ENCODE measurements at regions of chr15 and their contacts with region 1.

Region 1: GRCh38 chr15:28021281-28022039 is 77.7 kb downstream of the OCA2 start:
- DNase-seq: peak; percentile 73
- ATAC-seq: peak; percentile 75
- H3K4me3 Mint-ChIP-seq: no peak overlapping the region
- H3K27ac Mint-ChIP-seq: no peak overlapping the region
- H3K4me1 Mint-ChIP-seq: peaks cover 25% of the 10 kb centered on the region
- H3K27me3 Mint-ChIP-seq: peaks cover 5% of the 10 kb centered on the region
- CTCF ChIP-seq: peak; percentile 39; the same call in 1 of the 2 replicates

Region 2: GRCh38 chr15:27686369-27686768 is 335.1 kb before region 1 on chr15:
- CTCF ChIA-PET with region 1: interaction called, 38 read pairs
- POLR2A ChIA-PET with region 1: no interaction called
- DNase-seq: no peak
- ATAC-seq: peak; percentile 56
- H3K4me3 Mint-ChIP-seq: no peak overlapping the region
- H3K27ac Mint-ChIP-seq: 0 out of 2 replicates have a peak overlapping the region, but pooled peaks have one; percentile 27
- H3K4me1 Mint-ChIP-seq: peaks cover 12% of the 10 kb centered on the region
- H3K27me3 Mint-ChIP-seq: no peaks in the 10 kb centered on the region
- CTCF ChIP-seq: no peak

Region 3: DNA sequence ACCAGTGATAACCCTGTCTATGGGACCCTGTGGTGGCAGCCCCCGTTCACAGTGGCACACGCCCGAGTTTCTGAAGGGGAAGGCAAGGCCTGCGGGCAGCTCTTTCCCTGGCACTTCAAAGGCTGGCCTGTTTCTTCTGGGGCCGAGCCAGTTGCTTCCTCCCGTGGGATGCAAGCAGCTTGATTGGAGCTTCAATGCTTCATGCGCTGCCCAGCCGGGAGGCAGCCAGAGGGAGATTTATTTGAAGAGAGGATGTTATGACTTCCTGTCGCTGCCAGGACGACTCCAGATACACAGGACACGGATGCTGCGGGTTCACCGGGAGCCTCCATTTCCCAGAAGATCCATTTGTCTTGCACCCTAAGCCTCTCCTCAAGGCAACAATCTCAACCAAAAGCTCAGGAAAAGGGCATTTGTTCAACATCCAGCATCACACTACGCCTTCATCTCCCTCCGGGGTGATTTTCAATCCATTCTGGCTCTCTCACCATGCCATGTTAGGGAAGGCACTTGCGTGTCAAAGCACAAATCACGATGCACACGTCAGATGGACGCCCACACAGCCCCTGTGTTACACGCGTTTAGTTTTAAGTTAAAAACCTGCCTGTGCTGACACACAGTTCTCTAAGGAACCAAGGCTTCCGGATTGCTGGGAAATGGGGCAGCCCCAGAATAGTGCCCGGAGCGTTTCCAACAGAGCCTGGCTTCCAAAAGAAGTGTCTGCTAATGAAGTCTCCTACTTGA is 252.6 kb before region 1 on chr15:
- CTCF ChIA-PET with region 1: interaction called, 11 read pairs
- POLR2A ChIA-PET with region 1: no interaction called
- DNase-seq: no peak
- ATAC-seq: no peak
- H3K4me3 Mint-ChIP-seq: no peak overlapping the region
- H3K27ac Mint-ChIP-seq: no peak overlapping the region
- H3K4me1 Mint-ChIP-seq: peaks cover 32% of the 10 kb centered on the region
- H3K27me3 Mint-ChIP-seq: peaks cover 5% of the 10 kb centered on the region; the same call in 1 of the 2 replicates
- CTCF ChIP-seq: no peak

Region 4: DNA sequence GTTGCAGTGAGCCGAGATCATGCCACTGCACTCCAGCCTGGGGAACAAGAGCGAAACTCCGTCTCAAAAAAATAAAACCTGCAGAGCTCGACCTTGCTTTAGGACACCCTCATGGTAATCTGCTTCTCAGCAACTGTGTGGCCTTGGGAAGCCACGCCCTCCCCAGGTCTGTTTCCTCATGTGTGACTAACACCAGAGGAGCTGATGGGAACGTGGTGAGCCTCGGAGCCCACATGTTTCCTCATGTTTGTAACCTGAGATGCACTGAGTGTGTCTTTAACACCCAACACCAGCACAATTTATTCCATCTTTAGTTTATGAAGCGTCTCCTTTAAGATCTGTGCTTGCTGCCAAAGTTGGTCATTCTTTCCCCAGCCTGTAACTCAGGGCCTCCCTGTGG is 65.2 kb before region 1 on chr15:
- CTCF ChIA-PET with region 1: interaction called, 13 read pairs
- POLR2A ChIA-PET with region 1: no interaction called
- DNase-seq: no peak
- ATAC-seq: 0 out of 2 replicates have a peak, but pooled peaks have one; percentile 16
- H3K4me3 Mint-ChIP-seq: no peak overlapping the region
- H3K27ac Mint-ChIP-seq: no peak overlapping the region
- H3K4me1 Mint-ChIP-seq: no peaks in the 10 kb centered on the region
- H3K27me3 Mint-ChIP-seq: no peaks in the 10 kb centered on the region
- CTCF ChIP-seq: no peak

Region 5: DNA sequence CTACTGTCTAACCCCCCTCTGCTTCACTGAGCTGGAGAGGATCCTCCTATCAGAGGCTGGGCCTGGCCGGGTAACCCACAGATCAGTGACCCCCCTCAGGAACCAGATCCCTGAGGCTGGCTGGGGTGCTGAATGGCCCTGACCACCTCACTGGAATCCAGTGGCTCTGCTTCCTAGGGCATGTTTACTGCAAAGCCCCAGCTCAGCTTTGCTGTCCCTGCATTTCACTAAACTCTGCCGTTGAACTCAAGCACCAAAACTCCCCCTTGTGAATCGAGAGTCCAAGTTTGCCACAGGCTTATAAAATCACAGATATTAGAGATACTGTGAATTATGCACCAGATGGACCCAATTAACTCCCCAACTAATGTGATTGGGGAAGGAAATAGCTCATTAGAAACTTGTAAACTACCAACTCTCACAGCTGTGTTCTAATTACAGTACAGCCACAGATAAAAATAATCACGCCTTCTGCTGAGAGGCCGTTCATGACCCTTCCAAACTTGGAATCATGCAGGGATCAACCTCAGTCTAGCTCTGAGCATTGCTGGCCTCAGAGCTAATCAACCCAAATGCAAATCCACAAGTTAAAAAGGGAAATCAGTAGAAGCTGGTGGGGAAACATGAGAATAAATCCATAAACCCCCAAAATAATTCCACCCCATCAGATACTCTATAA is 30.6 kb after region 1 on chr15:
- CTCF ChIA-PET with region 1: interaction called, 14 read pairs
- POLR2A ChIA-PET with region 1: no interaction called
- DNase-seq: no peak
- ATAC-seq: no peak
- H3K4me3 Mint-ChIP-seq: no peak overlapping the region
- H3K27ac Mint-ChIP-seq: no peak overlapping the region
- H3K4me1 Mint-ChIP-seq: no peaks in the 10 kb centered on the region
- H3K27me3 Mint-ChIP-seq: no peaks in the 10 kb centered on the region
- CTCF ChIP-seq: no peak

Region 6: GRCh38 chr15:28125673-28126651 is 104.5 kb after region 1 on chr15:
- CTCF ChIA-PET with region 1: interaction called, 15 read pairs
- POLR2A ChIA-PET with region 1: no interaction called
- DNase-seq: no peak
- ATAC-seq: 0 out of 2 replicates have a peak, but pooled peaks have one; percentile 38
- H3K4me3 Mint-ChIP-seq: no peak overlapping the region
- H3K27ac Mint-ChIP-seq: no peak overlapping the region
- H3K4me1 Mint-ChIP-seq: no peaks in the 10 kb centered on the region
- H3K27me3 Mint-ChIP-seq: no peaks in the 10 kb centered on the region
- CTCF ChIP-seq: peak; percentile 45; the same call in 1 of the 2 replicates

Region 7: GRCh38 chr15:29115093-29115991 is 1093.9 kb after region 1 on chr15:
- CTCF ChIA-PET with region 1: no interaction called
- POLR2A ChIA-PET with region 1: no interaction called
- DNase-seq: peak; percentile 69
- ATAC-seq: peak; percentile 73
- H3K4me3 Mint-ChIP-seq: peak overlapping the region; percentile 59
- H3K27ac Mint-ChIP-seq: no peak overlapping the region
- H3K4me1 Mint-ChIP-seq: peaks cover 10% of the 10 kb centered on the region
- H3K27me3 Mint-ChIP-seq: no peaks in the 10 kb centered on the region
- CTCF ChIP-seq: peak; percentile 44; the same call in 1 of the 2 replicates

Measured in WTC11 (cell line).